Vagina (tissue), 2 donors: ENCODE measurements at regions of chr14 and their contacts with region 1.

Region 1: DNA sequence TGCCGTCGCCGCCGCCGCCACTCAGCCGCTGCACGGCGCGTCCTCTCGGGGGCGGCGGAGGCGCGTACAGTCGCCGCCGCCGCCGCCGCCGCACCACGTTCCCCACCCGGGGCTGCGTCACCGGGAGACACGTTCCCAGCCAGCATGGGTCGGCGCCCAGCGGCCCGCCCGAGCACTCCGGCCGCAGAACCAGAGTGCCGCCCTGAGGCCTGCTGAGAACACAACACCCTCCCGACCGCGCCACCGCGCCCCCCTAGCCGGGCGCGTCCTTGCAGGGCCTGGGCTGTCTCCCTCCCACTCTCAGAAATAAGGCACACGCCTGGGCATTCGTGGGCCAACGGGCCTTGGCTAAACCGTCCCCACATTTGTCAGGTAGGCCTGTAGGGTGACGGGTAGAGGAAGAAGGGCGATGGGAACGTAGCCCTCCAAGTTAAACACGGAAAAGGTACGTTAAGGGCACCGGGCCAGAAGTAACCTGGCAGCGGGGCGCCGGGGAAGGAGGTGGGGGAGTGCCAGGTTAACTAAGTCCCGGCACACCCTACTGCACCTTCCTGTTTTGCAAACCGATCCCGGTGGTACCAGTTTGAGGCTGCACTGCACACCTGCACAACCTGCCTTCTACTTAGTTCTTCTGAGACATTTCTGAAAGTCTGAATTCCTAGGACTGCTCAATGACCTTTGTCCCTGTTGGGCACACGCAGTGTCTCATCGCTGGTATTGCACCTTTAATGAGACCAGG is at the start of gene MAP4K5:
- DNase-seq: peak in 1 of 2 donors; percentile 91
- H3K4me3 ChIP-seq: peak within 1 kb of the TSS; percentile 85 to 86
- H3K27ac ChIP-seq: peak within 1 kb of the TSS; percentile 97
- H3K4me1 ChIP-seq: peaks cover 44% of the 10 kb centered on the region
- H3K27me3 ChIP-seq: no peaks in the 10 kb centered on the region
- CTCF ChIP-seq: peak; percentile 59 to 95 (median 76)
- POLR2A ChIP-seq: peak in 1 of 2 donors; percentile 73
- total RNA-seq, gene MAP4K5: 158 TPM

Region 2: DNA sequence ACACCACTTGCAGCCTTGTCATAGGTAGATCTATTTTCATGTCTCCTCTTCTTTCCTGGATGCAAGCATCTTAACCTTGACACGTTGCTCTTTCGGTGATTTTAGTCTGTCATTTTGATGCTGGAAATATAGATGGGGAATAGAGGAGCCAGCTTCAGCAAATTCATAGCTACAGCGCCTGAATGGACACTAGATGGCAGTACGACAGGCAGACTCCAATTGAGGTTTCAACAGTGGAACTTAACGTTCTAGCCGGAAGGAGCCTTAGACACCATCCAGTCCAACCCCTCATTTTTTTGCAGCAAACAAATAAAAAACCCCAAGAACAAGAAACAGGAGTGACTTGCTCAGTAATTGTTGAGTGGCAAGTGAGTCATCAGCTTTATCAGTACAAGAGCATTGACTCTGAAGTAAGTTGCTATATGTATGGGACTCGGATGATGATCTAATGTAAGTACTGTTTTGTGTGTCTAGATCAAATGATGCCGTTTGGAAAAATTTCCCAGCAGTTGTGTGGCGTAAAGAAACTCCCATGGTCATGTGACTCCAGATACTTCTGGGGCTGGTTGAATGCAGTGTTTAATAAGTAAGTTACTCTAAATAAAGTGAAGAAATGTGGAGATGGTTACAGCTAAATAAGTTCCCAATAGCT is 211.5 kb before region 1 on chr14:
- intact Hi-C with region 1: loop called (anchors 2 kb)
- DNase-seq: no peak
- H3K4me3 ChIP-seq: peak overlapping the region in 1 of 2 donors; percentile 13
- H3K27ac ChIP-seq: peak overlapping the region; percentile 64
- H3K4me1 ChIP-seq: peaks cover 19% of the 10 kb centered on the region
- H3K27me3 ChIP-seq: no peaks in the 10 kb centered on the region
- CTCF ChIP-seq: peak; percentile 26 to 75 (median 69)
- POLR2A ChIP-seq: no peak